ENCODE measurements at regions of chr6 and their contacts with region 1.

Region 1: GRCh38 chr6:32439602-32440214 is at the start of gene HLA-DRA:
- DNase-seq: peak in 1 of 2 donors; percentile 69
- ATAC-seq: peak; percentile 72 to 95 (median 85)
- H3K4me3 ChIP-seq: peak within 1 kb of the TSS; percentile 26 to 66 (median 53)
- H3K27ac ChIP-seq: peak within 1 kb of the TSS; percentile 20 to 95 (median 74)
- H3K4me1 ChIP-seq: peaks cover 0 to 29% (median 5%) of the 10 kb centered on the region in 9 donors
- H3K27me3 ChIP-seq: no peaks in the 10 kb centered on the region
- CTCF ChIP-seq: no peak
- total RNA-seq, gene HLA-DRA: 32.0 to 846 (median 94.7) TPM

Region 2: GRCh38 chr6:32127717-32128592 is 311.8 kb before region 1 on chr6 and contains the start of gene ATF6B:
- intact Hi-C with region 1: no loop called
- DNase-seq: peak; percentile 96 to 100
- ATAC-seq: peak; percentile 94 to 96 (median 95)
- H3K4me3 ChIP-seq: peak within 1 kb of the TSS; percentile 60 to 97 (median 86)
- H3K27ac ChIP-seq: peak within 1 kb of the TSS; percentile 72 to 94 (median 85)
- H3K4me1 ChIP-seq: peaks cover 16 to 44% (median 34%) of the 10 kb centered on the region in 9 donors
- H3K27me3 ChIP-seq: no peaks in the 10 kb centered on the region
- CTCF ChIP-seq: no peak
- total RNA-seq, gene ATF6B: 20.1 to 44.4 (median 29.4) TPM

Region 3: GRCh38 chr6:32609731-32610640 is 170.3 kb after region 1 on chr6:
- intact Hi-C with region 1: loop called in 2 of 10 experiments (anchors 5 to 10 kb)
- DNase-seq: peak; percentile 12 to 81
- ATAC-seq: peak; percentile 88 to 100 (median 98)
- H3K4me3 ChIP-seq: peak overlapping the region in 3 of 10 donors; percentile 9 to 28 (median 12)
- H3K27ac ChIP-seq: peak overlapping the region in 9 of 10 donors; percentile 43 to 90 (median 81)
- H3K4me1 ChIP-seq: peaks cover 0 to 13% (median 0%) of the 10 kb centered on the region in 9 donors
- H3K27me3 ChIP-seq: no peaks in the 10 kb centered on the region
- CTCF ChIP-seq: no peak